Calu3 (cell line): ENCODE measurements at regions of chr3 and their contacts with region 1.

Region 1: GRCh38 chr3:85576091-85576690 is 617.4 kb downstream of the CADM2 start:
- DNase-seq: peak; percentile 59
- H3K4me3 Mint-ChIP-seq: no peak overlapping the region
- H3K27ac Mint-ChIP-seq: no peak overlapping the region
- H3K4me1 Mint-ChIP-seq: peaks cover 19% of the 10 kb centered on the region
- H3K27me3 Mint-ChIP-seq: no peaks in the 10 kb centered on the region
- CTCF ChIP-seq: peak; percentile 61

Region 2: GRCh38 chr3:84974347-84974746 is 601.8 kb before region 1 on chr3:
- CTCF ChIA-PET with region 1: no interaction called
- intact Hi-C with region 1: loop called (anchors 10 kb)
- DNase-seq: no peak
- H3K4me3 Mint-ChIP-seq: no peak overlapping the region
- H3K27ac Mint-ChIP-seq: no peak overlapping the region
- H3K4me1 Mint-ChIP-seq: no peaks in the 10 kb centered on the region
- H3K27me3 Mint-ChIP-seq: no peaks in the 10 kb centered on the region
- CTCF ChIP-seq: no peak

Region 3: GRCh38 chr3:85110393-85110792 is 465.8 kb before region 1 on chr3:
- CTCF ChIA-PET with region 1: no interaction called
- intact Hi-C with region 1: loop called (anchors 1 kb)
- DNase-seq: no peak
- H3K4me3 Mint-ChIP-seq: no peak overlapping the region
- H3K27ac Mint-ChIP-seq: peak overlapping the region; percentile 34
- H3K4me1 Mint-ChIP-seq: peaks cover 13% of the 10 kb centered on the region
- H3K27me3 Mint-ChIP-seq: no peaks in the 10 kb centered on the region
- CTCF ChIP-seq: no peak

Region 4: DNA sequence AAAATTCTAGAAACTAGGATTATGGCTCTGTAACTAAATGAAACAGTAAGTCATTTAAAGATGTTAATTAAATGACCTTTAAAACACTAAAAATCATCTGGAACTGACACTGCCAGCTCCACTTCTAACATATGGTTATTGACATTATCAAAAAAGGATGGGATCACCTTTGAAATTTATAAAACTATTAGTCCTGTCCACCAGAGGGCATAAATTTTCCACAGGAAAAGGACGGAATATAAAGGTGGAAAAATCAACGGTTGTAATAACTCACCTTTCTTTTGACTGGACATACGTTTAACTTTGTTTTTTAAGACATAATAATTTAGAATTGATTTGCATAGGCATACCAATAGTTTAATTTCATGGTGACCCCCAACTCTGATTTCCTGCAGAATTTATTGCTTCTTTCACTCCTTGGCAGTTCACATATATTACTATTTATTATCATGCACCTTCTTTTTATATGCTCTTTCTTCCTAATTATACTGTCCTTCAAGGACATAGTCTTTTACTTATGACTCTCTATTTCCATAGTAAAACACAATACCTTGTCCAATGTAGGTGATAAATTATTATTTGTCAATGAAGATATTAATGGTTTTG is 271.7 kb before region 1 on chr3:
- CTCF ChIA-PET with region 1: no interaction called
- intact Hi-C with region 1: loop called (anchors 1 kb)
- DNase-seq: no peak
- H3K4me3 Mint-ChIP-seq: no peak overlapping the region
- H3K27ac Mint-ChIP-seq: no peak overlapping the region
- H3K4me1 Mint-ChIP-seq: no peaks in the 10 kb centered on the region
- H3K27me3 Mint-ChIP-seq: no peaks in the 10 kb centered on the region
- CTCF ChIP-seq: peak; percentile 45

Region 5: DNA sequence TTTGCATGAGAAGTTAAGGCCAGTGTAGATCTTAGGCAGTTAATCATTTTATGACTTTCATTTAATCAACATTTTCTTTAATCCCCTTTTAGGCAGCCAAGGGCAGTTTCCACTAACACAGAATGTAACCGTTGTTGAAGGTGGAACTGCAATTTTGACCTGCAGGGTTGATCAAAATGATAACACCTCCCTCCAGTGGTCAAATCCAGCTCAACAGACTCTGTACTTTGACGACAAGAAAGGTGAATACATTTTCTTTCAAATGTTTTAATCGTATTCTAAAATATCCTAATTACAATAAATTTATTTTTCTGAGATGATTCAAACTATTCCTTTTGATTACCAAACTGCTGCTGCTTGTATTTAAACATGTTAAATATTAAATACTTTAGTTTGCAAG is 225.8 kb after region 1 on chr3:
- CTCF ChIA-PET with region 1: no interaction called
- intact Hi-C with region 1: loop called (anchors 5 kb)
- DNase-seq: peak; percentile 41
- H3K4me3 Mint-ChIP-seq: no peak overlapping the region
- H3K27ac Mint-ChIP-seq: no peak overlapping the region
- H3K4me1 Mint-ChIP-seq: no peaks in the 10 kb centered on the region
- H3K27me3 Mint-ChIP-seq: no peaks in the 10 kb centered on the region
- CTCF ChIP-seq: peak; percentile 20